PC-9 (cell line): ENCODE measurements at regions of chr10 and their contacts with region 1.

Region 1: GRCh38 chr10:48476279-48476982 is 128.4 kb downstream of the ARHGAP22 start:
- DNase-seq: no peak
- H3K4me3 ChIP-seq: no peak overlapping the region
- H3K27ac ChIP-seq: no peak overlapping the region
- H3K4me1 ChIP-seq: no peaks in the 10 kb centered on the region
- H3K27me3 ChIP-seq: no peaks in the 10 kb centered on the region
- CTCF ChIP-seq: no peak

Region 2: DNA sequence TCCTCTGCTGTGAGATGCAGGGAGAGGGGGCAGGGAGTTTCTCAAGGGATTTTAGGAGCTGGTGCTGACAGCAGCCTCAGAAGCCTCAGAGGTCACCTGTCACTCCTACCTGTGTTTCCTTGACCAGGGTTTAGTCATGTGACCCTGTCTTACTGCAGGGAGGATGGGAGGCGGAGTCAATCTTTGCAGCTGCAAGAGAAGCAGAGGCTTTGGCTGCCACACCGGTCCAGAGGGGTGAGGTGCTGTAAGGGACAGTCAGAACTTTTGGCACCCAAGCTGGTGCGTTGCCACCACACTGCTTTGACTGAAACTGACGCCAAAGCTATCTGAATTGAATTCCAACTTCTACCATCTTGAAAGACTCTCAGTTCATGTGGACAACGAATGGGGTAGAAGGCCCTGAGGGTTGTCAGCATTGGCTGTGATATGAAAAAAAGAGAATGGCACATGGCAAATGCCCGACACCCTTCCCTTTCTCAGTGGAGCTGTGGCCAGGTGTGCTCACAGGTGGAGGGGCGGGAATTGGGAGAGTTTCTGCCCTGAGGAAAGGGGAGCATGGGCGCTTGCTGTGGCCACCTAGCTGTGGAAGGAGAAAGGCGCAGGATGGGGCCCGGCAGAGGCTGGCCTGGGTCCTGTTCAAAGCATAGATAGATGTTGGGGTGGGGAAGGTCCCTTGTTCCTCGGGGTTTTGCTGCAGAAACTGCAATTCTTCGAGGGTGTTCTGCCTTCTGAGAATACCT is 59.2 kb after region 1 on chr10:
- CTCF ChIA-PET with region 1: no interaction called
- POLR2A ChIA-PET with region 1: no interaction called
- intact Hi-C with region 1: loop called (anchors 2 kb)
- DNase-seq: no peak
- H3K4me3 ChIP-seq: no peak overlapping the region
- H3K27ac ChIP-seq: no peak overlapping the region
- H3K4me1 ChIP-seq: no peaks in the 10 kb centered on the region
- H3K27me3 ChIP-seq: no peaks in the 10 kb centered on the region
- CTCF ChIP-seq: no peak; the same call in 1 of the 2 replicates